HEK293T (cell line): ENCODE measurements at regions of chr19 and their contacts with region 1.

Region 1: DNA sequence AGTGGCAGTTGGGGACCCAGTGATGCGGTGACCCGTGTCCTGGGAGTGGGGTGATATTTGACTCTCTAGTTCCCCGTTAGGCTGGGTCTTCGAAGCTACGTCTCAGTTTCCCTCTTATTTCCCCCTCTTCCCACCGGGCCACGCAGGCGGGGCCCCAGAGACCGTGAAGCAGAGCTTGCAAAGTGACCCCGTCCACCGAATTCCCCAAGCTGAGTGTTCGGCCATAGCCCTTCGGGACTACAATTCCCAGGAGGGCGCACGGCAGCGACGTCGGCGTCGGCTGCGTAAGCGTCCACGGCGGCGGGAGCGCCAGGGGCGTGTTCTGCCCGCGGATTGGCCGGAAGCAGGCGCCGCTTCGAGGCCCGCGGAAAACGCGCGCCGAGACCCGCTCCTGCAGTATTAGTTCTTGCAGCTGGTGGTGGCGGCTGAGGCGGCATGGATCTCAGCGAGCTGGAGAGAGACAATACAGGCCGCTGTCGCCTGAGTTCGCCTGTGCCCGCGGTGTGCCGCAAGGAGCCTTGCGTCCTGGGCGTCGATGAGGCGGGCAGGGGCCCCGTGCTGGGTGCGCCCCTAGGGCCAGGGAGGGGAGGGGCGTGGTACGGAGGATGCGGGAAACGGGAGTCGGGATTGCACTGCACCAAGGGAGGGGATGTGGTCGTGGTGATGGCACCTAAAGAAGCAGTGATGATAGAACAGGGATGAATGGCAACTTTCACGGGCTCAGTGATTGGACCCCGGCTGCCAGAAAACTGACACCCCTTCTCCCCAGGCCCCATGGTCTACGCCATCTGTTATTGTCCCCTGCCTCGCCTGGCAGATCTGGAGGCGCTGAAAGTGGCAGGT is at the start of gene RNASEH2A:
- DNase-seq: peak; percentile 96

Region 2: GRCh38 chr19:12821761-12822160 is 15.3 kb after region 1 on chr19:
- CTCF ChIA-PET with region 1: no interaction called
- POLR2A ChIA-PET with region 1: interaction called, 10 read pairs
- DNase-seq: no peak